ENCODE measurements at regions of chr1 and their contacts with region 1.

Region 1: DNA sequence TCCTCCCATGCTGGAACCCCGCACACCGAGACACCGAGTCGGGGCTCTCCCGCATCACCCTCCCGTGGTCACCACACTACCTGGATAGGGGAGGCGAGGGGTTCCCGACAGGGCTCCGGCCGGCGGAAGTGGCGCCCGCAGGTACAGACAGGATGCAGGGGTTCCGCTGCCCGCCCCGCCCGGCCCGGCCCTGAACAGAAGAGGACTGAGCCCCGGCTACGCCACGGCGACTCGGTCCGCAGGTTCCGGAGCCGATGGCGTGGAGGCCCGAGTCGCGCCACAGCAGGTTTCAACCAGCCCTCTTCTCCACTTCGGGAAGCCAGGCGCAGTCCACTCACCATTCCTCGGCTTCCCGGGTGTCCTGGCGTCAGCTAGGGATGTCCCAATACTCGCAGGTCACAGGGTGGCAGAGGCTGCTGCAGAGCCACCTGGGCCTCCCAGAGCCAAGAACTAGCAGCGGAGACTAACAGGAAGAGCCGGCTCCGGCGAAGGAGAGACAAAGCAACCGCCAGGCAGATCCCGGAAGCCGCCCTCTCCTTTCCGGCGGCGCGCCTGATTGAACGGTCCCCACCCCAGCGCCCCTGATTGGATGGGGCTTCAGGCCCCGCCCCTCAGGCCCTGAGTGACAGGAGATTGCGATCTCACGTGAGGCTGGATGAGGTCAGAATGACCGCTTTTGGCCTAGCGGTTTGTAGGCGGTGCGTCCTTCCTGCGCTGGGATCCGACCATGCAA is at the start of gene ZNF669:
- DNase-seq: peak; percentile 94
- ATAC-seq: peak; percentile 99
- H3K4me3 ChIP-seq: peak within 1 kb of the TSS; percentile 88 to 100 (median 96)
- H3K27ac ChIP-seq: peak within 1 kb of the TSS; percentile 97
- H3K4me1 ChIP-seq: peaks cover 23% of the 10 kb centered on the region
- H3K27me3 ChIP-seq: no peaks in the 10 kb centered on the region
- CTCF ChIP-seq: 0 out of 2 replicates have a peak, but pooled peaks have one; percentile 25
- EP300 ChIP-seq: no peak
- POLR2A ChIP-seq: peak; percentile 87 to 96
- RAD21 ChIP-seq: no peak
- total RNA-seq, gene ZNF669: 13.6 and 14.6 TPM in 2 replicates

Region 2: GRCh38 chr1:246931549-246932365 is 172.3 kb before region 1 on chr1 and contains the start of gene AHCTF1:
- CTCF ChIA-PET with region 1: no interaction called
- POLR2A ChIA-PET with region 1: no interaction called
- in situ Hi-C with region 1: loop called (anchors 10 kb)
- intact Hi-C with region 1: no loop called
- DNase-seq: peak; percentile 97
- ATAC-seq: peak; percentile 96
- H3K4me3 ChIP-seq: peak within 1 kb of the TSS; percentile 91 to 99 (median 91)
- H3K27ac ChIP-seq: peak within 1 kb of the TSS; percentile 99
- H3K4me1 ChIP-seq: peaks cover 23% of the 10 kb centered on the region
- H3K27me3 ChIP-seq: no peaks in the 10 kb centered on the region; a peak in 1 of 5 replicates
- CTCF ChIP-seq: 0 out of 2 replicates have a peak, but pooled peaks have one; percentile 19
- EP300 ChIP-seq: no peak
- POLR2A ChIP-seq: peak; percentile 96
- RAD21 ChIP-seq: no peak; the same call in 1 of the 2 replicates
- total RNA-seq, gene AHCTF1: 45.9 and 73.9 TPM in 2 replicates